ENCODE measurements at regions of chr3 and their contacts with region 1.

Region 1: GRCh38 chr3:46935168-46935858 is 41.2 kb downstream of the CCDC12 start:
- DNase-seq: no peak
- ATAC-seq: peak; percentile 29
- H3K4me3 Mint-ChIP-seq: no peak overlapping the region
- H3K27ac Mint-ChIP-seq: peak overlapping the region; percentile 36
- H3K4me1 Mint-ChIP-seq: peaks cover 57% of the 10 kb centered on the region
- H3K27me3 Mint-ChIP-seq: no peaks in the 10 kb centered on the region
- CTCF ChIP-seq: no peak

Region 2: GRCh38 chr3:46820852-46821251 is 114.5 kb before region 1 on chr3:
- CTCF ChIA-PET with region 1: no interaction called
- POLR2A ChIA-PET with region 1: no interaction called
- intact Hi-C with region 1: no loop called
- DNase-seq: no peak
- ATAC-seq: no peak
- H3K4me3 Mint-ChIP-seq: no peak overlapping the region
- H3K27ac Mint-ChIP-seq: no peak overlapping the region
- H3K4me1 Mint-ChIP-seq: no peaks in the 10 kb centered on the region
- H3K27me3 Mint-ChIP-seq: peaks cover 4% of the 10 kb centered on the region
- CTCF ChIP-seq: no peak

Region 3: GRCh38 chr3:46878789-46879436 is 56.4 kb before region 1 on chr3:
- CTCF ChIA-PET with region 1: no interaction called
- POLR2A ChIA-PET with region 1: no interaction called
- intact Hi-C with region 1: no loop called
- DNase-seq: no peak
- ATAC-seq: no peak
- H3K4me3 Mint-ChIP-seq: no peak overlapping the region
- H3K27ac Mint-ChIP-seq: no peak overlapping the region
- H3K4me1 Mint-ChIP-seq: peaks cover 9% of the 10 kb centered on the region
- H3K27me3 Mint-ChIP-seq: peaks cover 28% of the 10 kb centered on the region
- CTCF ChIP-seq: no peak

Region 4: DNA sequence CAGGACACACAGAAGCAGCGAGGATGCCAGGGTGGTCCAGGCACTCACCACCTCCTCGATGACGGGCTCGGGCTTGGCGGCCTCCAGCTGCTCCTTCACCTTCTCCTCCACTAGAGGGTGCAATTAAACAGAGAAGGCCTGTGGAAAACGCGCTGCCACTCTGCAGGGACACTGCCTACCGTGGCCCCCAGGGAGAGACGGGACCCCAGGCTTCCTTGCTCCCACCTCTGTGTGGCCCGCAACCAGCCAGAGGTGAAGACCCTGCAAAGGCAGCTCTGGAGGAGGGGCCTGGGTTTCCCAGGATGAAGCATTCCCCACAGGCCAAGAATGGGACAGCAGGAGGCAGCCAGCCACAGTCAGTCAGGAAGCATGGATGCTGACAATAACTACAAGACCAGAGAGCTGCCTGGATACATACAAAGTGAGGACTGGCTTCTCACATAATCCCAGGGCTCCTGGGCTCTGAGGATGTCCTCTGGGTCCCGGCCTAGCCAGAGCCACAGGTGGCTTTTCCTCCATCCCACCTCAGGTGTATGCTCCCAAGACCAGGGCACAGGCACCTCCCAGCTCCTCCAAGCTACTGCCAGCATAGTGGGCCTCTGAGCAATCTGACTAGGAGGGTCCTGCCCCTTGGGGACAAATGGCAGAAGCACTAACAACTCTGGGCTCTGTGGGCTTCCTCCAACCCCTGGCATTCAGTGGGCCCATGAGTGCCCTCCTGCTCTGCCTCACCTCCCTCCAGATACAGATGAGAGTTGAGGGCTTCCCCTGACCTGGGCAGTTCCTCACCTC is 11.6 kb before region 1 on chr3:
- CTCF ChIA-PET with region 1: interaction called, 24 read pairs
- POLR2A ChIA-PET with region 1: interaction called, 8 read pairs
- intact Hi-C with region 1: no loop called
- DNase-seq: peak; percentile 59
- ATAC-seq: peak; percentile 80
- H3K4me3 Mint-ChIP-seq: no peak overlapping the region
- H3K27ac Mint-ChIP-seq: peak overlapping the region; percentile 67
- H3K4me1 Mint-ChIP-seq: peaks cover 24% of the 10 kb centered on the region
- H3K27me3 Mint-ChIP-seq: no peaks in the 10 kb centered on the region
- CTCF ChIP-seq: peak; percentile 77

Measured in activated CD8-positive, alpha-beta T cell treated with anti-CD3 and anti-CD28 coated beads for 36 hours (primary cell).